OCI-LY7 (cell line): ENCODE measurements at regions of chr7 and their contacts with region 1.

Region 1: GRCh38 chr7:30276203-30276900 is 8.0 kb upstream of the ZNRF2 start:
- DNase-seq: peak; percentile 92
- H3K4me3 ChIP-seq: peak overlapping the region; percentile 51
- H3K27ac ChIP-seq: peak overlapping the region; percentile 81
- H3K4me1 ChIP-seq: peaks cover 76% of the 10 kb centered on the region
- CTCF ChIP-seq: peak; percentile 98

Region 2: DNA sequence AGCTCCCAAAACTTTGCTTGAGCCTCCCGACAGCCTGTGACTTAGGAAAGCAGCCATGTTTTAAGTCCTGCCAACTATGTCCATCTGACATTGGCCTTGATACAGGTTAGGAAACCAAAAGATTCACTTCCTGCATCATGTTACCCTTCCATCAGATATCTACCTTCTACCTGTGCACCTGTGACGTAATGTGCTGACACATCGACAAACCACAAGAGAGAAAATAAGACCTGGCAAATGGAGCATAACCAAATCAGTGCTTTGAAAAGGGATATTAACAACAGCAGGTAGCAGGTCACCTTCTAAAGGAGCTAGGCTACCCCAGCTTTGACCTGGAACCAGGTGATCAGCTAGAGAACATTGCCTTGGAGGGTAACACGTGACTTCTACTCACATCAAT is 727.5 kb before region 1 on chr7:
- CTCF ChIA-PET with region 1: no interaction called
- POLR2A ChIA-PET with region 1: no interaction called
- intact Hi-C with region 1: no loop called
- DNase-seq: no peak
- H3K4me3 ChIP-seq: no peak overlapping the region
- H3K27ac ChIP-seq: no peak overlapping the region
- H3K4me1 ChIP-seq: no peaks in the 10 kb centered on the region
- CTCF ChIP-seq: no peak

Region 3: GRCh38 chr7:30026229-30027064 is 249.9 kb before region 1 on chr7 and contains the start of gene FKBP14:
- CTCF ChIA-PET with region 1: no interaction called
- POLR2A ChIA-PET with region 1: no interaction called
- intact Hi-C with region 1: loop called (anchors 2 kb)
- DNase-seq: peak; percentile 99
- H3K4me3 ChIP-seq: peak within 1 kb of the TSS; percentile 81
- H3K27ac ChIP-seq: peak within 1 kb of the TSS; percentile 69
- H3K4me1 ChIP-seq: peaks cover 45% of the 10 kb centered on the region
- CTCF ChIP-seq: no peak
- total RNA-seq, gene FKBP14: 5.3 and 6.3 TPM in 2 replicates

Region 4: DNA sequence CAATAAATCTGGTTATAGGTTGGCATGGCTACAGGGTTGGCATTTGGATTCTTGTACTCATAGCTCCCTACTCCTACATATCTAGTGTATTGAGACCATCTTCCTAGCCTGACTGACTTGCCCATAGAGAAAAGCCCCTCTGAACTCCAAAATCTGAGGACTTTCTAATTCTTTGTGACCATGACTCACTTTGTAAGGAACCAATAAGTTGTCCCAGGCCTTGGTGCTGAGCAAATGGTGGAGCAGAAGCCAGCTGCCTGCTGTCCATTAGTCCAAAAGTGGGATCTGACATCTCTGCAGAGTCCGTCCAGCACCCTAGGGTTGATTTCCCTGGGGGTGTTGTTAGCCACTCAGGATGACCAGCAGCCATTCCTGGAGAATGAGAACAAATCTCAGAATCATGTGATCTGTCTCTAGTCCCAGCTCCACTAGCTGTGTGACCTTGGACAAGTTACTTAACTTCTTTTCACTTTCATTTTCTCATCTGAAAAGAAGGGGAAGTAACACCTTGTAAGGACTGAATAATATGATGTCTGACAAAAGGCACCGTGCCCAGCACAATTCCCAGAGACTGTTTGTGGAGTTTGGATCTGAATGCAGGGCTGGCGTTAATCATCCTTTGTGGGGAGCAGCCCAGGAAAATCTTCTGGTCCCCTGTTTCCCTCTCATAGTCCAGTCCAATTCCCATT is 97.5 kb before region 1 on chr7:
- CTCF ChIA-PET with region 1: no interaction called
- POLR2A ChIA-PET with region 1: interaction called, 21 read pairs
- intact Hi-C with region 1: no loop called
- DNase-seq: peak; percentile 69
- H3K4me3 ChIP-seq: peak overlapping the region; percentile 43
- H3K27ac ChIP-seq: peak overlapping the region; percentile 8
- H3K4me1 ChIP-seq: peaks cover 28% of the 10 kb centered on the region
- CTCF ChIP-seq: no peak

Region 5: DNA sequence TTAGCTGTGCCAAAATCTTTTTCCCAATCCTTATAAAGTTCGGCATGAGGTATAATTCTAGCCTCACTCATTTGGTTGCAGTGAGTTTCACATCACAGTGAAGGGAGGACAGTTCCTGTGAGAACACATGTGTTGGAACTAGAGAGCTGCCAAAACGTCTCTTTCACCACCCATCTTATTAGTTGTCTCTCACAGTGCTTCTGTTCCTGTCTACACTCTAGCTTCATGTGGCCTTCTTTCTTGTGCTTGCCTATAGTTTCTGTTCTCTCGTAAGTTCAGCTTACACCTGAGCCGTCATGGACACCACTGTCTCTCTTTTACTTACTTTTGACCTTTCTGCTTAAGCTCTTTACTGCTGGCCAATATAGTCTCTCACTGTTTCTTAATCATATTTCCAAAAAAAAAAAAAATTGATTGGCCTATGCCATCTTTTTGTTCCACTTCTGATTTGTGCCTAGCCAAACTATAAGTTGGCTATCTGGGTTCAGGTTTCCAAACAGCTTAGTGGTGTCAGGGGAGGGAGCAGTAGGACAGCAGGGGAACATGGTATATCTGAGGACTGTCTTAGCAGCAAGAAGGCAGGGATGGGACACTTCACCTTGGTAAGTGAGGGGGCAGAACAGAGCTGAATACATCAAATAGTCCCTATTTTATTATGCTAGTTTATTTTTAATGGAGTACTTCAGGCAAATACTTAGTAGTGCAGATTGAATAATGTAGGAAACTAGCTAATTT is 46.1 kb after region 1 on chr7:
- CTCF ChIA-PET with region 1: no interaction called
- POLR2A ChIA-PET with region 1: interaction called, 11 read pairs
- intact Hi-C with region 1: no loop called
- DNase-seq: peak; percentile 80
- H3K4me3 ChIP-seq: peak overlapping the region; percentile 63
- H3K27ac ChIP-seq: peak overlapping the region; percentile 78
- H3K4me1 ChIP-seq: peaks cover 40% of the 10 kb centered on the region
- CTCF ChIP-seq: 0 out of 2 replicates have a peak, but pooled peaks have one; percentile 31

Region 6: DNA sequence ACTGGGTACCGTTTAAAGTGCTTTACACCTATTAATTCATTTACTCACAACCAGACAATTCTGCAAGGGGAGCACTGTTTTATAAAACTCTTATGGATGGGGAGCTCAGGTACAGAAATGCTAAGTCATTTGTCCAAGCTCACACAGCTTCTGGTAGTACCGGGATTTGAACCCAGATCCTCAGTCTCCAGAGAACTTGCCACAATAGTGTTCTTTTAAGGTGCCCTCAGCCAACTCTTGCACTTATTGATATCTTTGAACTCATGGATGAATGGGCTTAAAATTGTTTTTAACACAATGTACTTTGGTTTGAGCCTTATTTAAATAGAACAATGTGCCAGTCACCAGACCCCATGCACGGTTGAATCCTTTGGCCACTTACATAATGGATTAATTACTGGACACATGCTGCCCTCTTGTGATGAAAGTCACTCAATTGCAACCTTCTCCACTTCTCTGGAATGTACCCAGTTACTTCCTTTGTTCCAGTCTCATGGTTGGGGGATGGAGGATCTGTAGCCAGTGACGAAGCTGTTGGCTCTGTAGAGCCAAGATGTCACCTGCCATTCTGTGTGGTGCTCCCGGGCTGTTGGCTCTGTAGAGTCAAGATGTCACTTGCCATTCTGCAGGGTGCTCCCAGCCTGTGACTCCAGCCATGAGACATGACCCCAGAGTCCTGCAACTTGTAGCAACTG is 136.6 kb after region 1 on chr7:
- CTCF ChIA-PET with region 1: interaction called, 3 read pairs
- POLR2A ChIA-PET with region 1: interaction called, 3 read pairs
- intact Hi-C with region 1: loop called (anchors 1 kb)
- DNase-seq: peak; percentile 47
- H3K4me3 ChIP-seq: no peak overlapping the region
- H3K27ac ChIP-seq: no peak overlapping the region
- H3K4me1 ChIP-seq: peaks cover 41% of the 10 kb centered on the region
- CTCF ChIP-seq: peak; percentile 67

Region 7: GRCh38 chr7:30445770-30446169 is 169.4 kb after region 1 on chr7:
- CTCF ChIA-PET with region 1: no interaction called
- POLR2A ChIA-PET with region 1: interaction called, 3 read pairs
- intact Hi-C with region 1: loop called (anchors 5 kb)
- DNase-seq: peak; percentile 93
- H3K4me3 ChIP-seq: no peak overlapping the region
- H3K27ac ChIP-seq: no peak overlapping the region
- H3K4me1 ChIP-seq: peaks cover 11% of the 10 kb centered on the region
- CTCF ChIP-seq: peak; percentile 78

Region 8: DNA sequence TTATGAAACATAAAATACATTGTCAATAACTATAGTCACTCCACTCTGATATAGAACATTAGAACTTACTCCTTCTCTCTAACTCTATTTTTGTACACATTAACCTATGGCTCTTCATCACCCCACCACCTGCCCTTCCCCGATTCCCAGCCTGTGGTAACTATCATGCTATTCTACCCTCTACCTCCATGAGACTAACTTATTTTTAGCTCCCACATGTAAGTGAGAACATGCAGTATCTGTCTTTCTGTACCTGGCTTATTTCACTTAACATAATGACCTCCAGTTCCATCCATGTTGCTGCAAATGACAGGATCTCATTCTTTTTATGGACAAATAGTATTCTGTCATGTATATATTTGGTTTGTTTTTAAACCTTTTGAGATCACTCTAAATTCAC is 211.0 kb after region 1 on chr7:
- CTCF ChIA-PET with region 1: no interaction called
- POLR2A ChIA-PET with region 1: no interaction called
- intact Hi-C with region 1: no loop called
- DNase-seq: no peak
- H3K4me3 ChIP-seq: no peak overlapping the region
- H3K27ac ChIP-seq: no peak overlapping the region
- H3K4me1 ChIP-seq: no peaks in the 10 kb centered on the region
- CTCF ChIP-seq: no peak

Region 9: DNA sequence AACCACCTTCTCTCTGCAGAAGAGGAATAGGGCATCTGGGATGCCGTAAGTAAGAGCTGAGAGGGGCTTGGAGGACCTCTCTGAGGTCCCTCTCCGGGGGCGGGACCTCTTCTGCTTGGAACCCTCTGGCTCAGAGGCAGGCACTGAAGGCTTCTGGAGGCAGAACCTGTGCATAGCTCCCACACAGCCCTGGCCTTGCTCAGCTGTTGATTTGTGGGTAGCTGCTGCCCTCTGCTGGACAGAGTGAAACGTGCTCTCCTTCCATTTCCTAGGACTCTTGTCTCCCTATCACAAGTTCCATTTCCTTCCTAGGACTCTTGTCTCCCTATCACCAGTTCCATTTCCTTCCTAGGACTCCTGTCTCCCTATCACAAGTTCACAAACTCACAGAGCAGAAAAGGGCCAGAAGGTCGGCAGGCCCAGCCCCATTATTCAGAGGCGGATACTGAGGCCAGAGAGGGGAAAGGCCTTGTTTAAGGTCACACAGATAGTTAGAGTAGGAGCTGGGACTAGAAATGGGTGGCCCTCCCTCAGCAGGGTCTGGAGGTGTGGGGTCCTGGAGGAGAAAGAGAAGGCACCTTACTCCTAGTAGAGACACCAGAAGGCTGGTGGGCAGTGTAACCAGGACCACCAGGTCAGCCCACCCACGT is 288.0 kb after region 1 on chr7:
- CTCF ChIA-PET with region 1: interaction called, 5 read pairs
- POLR2A ChIA-PET with region 1: interaction called, 7 read pairs
- intact Hi-C with region 1: loop called (anchors 1 kb)
- DNase-seq: peak; percentile 86
- H3K4me3 ChIP-seq: no peak overlapping the region
- H3K27ac ChIP-seq: no peak overlapping the region
- H3K4me1 ChIP-seq: no peaks in the 10 kb centered on the region
- CTCF ChIP-seq: peak; percentile 91